ENCODE measurements at regions of chr16 and their contacts with region 1.

Region 1: GRCh38 chr16:48076455-48077012 is 79.3 kb downstream of the ABCC12 start:
- DNase-seq: no peak
- ATAC-seq: no peak
- H3K4me3 ChIP-seq: no peak overlapping the region
- H3K27ac ChIP-seq: no peak overlapping the region
- H3K4me1 ChIP-seq: no peaks in the 10 kb centered on the region
- H3K27me3 ChIP-seq: no peaks in the 10 kb centered on the region
- CTCF ChIP-seq: no peak
- EP300 ChIP-seq: no peak
- POLR2A ChIP-seq: no peak
- RAD21 ChIP-seq: no peak

Region 2: DNA sequence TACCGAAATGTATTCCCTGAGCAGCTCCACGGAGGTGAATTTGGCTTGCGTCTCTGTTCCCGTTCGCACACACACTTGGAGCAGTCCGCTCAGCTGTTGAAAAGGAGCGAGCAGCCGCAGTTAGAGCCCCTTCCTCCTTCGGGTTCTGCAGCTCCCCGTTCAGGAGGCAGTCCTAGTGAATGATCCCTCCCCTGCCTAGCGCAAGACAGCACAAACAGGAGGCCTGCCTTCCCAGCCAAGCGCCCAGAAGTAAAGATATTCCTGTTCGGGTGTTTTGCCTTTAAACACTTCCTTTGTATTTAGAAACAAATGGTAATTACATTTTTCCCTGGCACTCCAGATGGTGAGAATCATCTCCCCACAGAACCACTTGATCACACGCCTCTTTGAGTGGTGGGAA is 14.6 kb after region 1 on chr16:
- CTCF ChIA-PET with region 1: interaction called, 4 read pairs
- POLR2A ChIA-PET with region 1: no interaction called
- RAD21 ChIA-PET with region 1: interaction called, 8 read pairs
- SMC1A ChIA-PET with region 1: interaction called, 10 read pairs
- in situ Hi-C with region 1: no loop called
- intact Hi-C with region 1: no loop called
- DNase-seq: no peak
- ATAC-seq: no peak
- H3K4me3 ChIP-seq: no peak overlapping the region
- H3K27ac ChIP-seq: no peak overlapping the region
- H3K4me1 ChIP-seq: peaks cover 3% of the 10 kb centered on the region; the same call in 1 of the 2 replicates
- H3K27me3 ChIP-seq: no peaks in the 10 kb centered on the region
- CTCF ChIP-seq: no peak
- EP300 ChIP-seq: no peak
- POLR2A ChIP-seq: no peak
- RAD21 ChIP-seq: no peak